ENCODE measurements at regions of chr12 and their contacts with region 1.

Region 1: GRCh38 chr12:1795785-1796514 is 24.4 kb upstream of the LRTM2 start:
- DNase-seq: peak; percentile 95
- ATAC-seq: peak; percentile 92
- H3K4me3 ChIP-seq: peak overlapping the region; percentile 64 to 88 (median 67)
- H3K4me3 Mint-ChIP-seq: peak overlapping the region; percentile 98
- H3K27ac ChIP-seq: peak overlapping the region; percentile 67 to 83
- H3K27ac Mint-ChIP-seq: peak overlapping the region; percentile 97
- H3K4me1 ChIP-seq: peaks cover 14 to 37% of the 10 kb centered on the region in 2 donors
- H3K4me1 Mint-ChIP-seq: peaks cover 33% of the 10 kb centered on the region
- H3K27me3 ChIP-seq: no peaks in the 10 kb centered on the region
- H3K27me3 Mint-ChIP-seq: no peaks in the 10 kb centered on the region
- CTCF ChIP-seq: peak; percentile 90

Region 2: GRCh38 chr12:1117970-1118563 is 677.9 kb before region 1 on chr12:
- CTCF ChIA-PET with region 1: interaction called, 24 read pairs
- POLR2A ChIA-PET with region 1: no interaction called
- intact Hi-C with region 1: no loop called
- DNase-seq: peak; percentile 80
- ATAC-seq: peak; percentile 88
- H3K4me3 ChIP-seq: no peak overlapping the region
- H3K4me3 Mint-ChIP-seq: no peak overlapping the region
- H3K27ac ChIP-seq: no peak overlapping the region
- H3K27ac Mint-ChIP-seq: no peak overlapping the region
- H3K4me1 ChIP-seq: no peaks in the 10 kb centered on the region
- H3K4me1 Mint-ChIP-seq: no peaks in the 10 kb centered on the region
- H3K27me3 ChIP-seq: no peaks in the 10 kb centered on the region
- H3K27me3 Mint-ChIP-seq: no peaks in the 10 kb centered on the region
- CTCF ChIP-seq: peak; percentile 98

Region 3: DNA sequence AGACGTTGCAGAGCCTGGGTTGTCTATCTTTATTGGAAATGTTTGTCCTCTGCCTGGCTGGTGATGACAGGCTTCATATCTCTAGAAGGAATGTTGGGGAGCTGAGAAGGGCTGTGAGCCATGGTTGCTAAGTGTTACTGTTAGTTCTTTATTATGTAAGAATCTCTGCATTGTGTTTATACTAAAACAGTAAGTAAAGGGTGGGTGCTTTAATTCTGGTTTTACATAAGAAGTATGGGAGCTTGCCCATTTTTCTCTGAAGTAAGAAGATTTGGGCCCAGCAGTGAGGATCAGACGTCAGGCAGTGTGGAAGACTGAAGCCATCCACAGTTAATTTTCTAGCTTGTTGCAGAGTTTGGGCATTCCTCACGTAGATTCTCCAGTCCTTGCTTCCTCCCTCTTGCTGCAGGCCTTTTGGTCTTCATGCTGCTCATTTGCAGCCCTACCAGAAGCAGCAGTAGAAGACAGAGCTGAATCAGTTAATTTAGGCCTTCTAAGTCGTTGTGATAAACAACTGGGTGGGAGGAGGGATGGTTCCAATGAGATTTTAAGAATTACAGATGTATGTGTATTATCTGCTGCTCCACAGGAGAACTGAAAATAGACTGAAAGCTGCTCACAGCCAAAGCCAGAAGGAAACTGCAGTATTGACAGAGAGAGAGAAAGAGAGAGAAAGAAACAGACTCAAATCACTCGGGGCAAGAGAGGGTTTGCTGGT is 145.5 kb before region 1 on chr12:
- CTCF ChIA-PET with region 1: interaction called, 620 read pairs
- POLR2A ChIA-PET with region 1: interaction called, 7 read pairs
- intact Hi-C with region 1: loop called (anchors 1 kb)
- DNase-seq: no peak
- ATAC-seq: no peak
- H3K4me3 ChIP-seq: no peak overlapping the region
- H3K4me3 Mint-ChIP-seq: no peak overlapping the region
- H3K27ac ChIP-seq: no peak overlapping the region
- H3K27ac Mint-ChIP-seq: no peak overlapping the region
- H3K4me1 ChIP-seq: peaks cover 0 to 19% of the 10 kb centered on the region in 2 donors
- H3K4me1 Mint-ChIP-seq: peaks cover 11% of the 10 kb centered on the region
- H3K27me3 ChIP-seq: no peaks in the 10 kb centered on the region
- H3K27me3 Mint-ChIP-seq: peaks cover 31% of the 10 kb centered on the region
- CTCF ChIP-seq: no peak

Region 4: GRCh38 chr12:1690578-1691122 is 105.3 kb before region 1 on chr12 and contains the start of gene ADIPOR2:
- CTCF ChIA-PET with region 1: interaction called, 8 read pairs
- POLR2A ChIA-PET with region 1: no interaction called
- intact Hi-C with region 1: loop called (anchors 1 kb)
- DNase-seq: peak; percentile 97
- ATAC-seq: peak; percentile 94
- H3K4me3 ChIP-seq: peak within 1 kb of the TSS; percentile 51 to 91 (median 78)
- H3K4me3 Mint-ChIP-seq: peak within 1 kb of the TSS; percentile 86
- H3K27ac ChIP-seq: peak within 1 kb of the TSS; percentile 81 to 97
- H3K27ac Mint-ChIP-seq: peak within 1 kb of the TSS; percentile 96
- H3K4me1 ChIP-seq: peaks cover 28 to 30% of the 10 kb centered on the region in 2 donors
- H3K4me1 Mint-ChIP-seq: peaks cover 36% of the 10 kb centered on the region
- H3K27me3 ChIP-seq: no peaks in the 10 kb centered on the region
- H3K27me3 Mint-ChIP-seq: peaks cover 6% of the 10 kb centered on the region
- CTCF ChIP-seq: no peak
- total RNA-seq, gene ADIPOR2: 35.9 and 38.9 TPM in 2 replicates

Region 5: GRCh38 chr12:1855241-1855640 is 59.3 kb after region 1 on chr12:
- CTCF ChIA-PET with region 1: no interaction called
- POLR2A ChIA-PET with region 1: no interaction called
- intact Hi-C with region 1: no loop called
- DNase-seq: no peak
- ATAC-seq: no peak
- H3K4me3 ChIP-seq: no peak overlapping the region
- H3K4me3 Mint-ChIP-seq: no peak overlapping the region
- H3K27ac ChIP-seq: no peak overlapping the region
- H3K27ac Mint-ChIP-seq: no peak overlapping the region
- H3K4me1 ChIP-seq: no peaks in the 10 kb centered on the region
- H3K4me1 Mint-ChIP-seq: no peaks in the 10 kb centered on the region
- H3K27me3 ChIP-seq: peaks cover 0 to 6% (median 0%) of the 10 kb centered on the region in 4 experiments
- H3K27me3 Mint-ChIP-seq: peaks cover 8% of the 10 kb centered on the region
- CTCF ChIP-seq: no peak

Region 6: GRCh38 chr12:1927751-1928351 is 131.9 kb after region 1 on chr12:
- CTCF ChIA-PET with region 1: interaction called, 10 read pairs
- POLR2A ChIA-PET with region 1: interaction called, 6 read pairs
- intact Hi-C with region 1: no loop called
- DNase-seq: no peak
- ATAC-seq: no peak
- H3K4me3 ChIP-seq: no peak overlapping the region
- H3K4me3 Mint-ChIP-seq: no peak overlapping the region
- H3K27ac ChIP-seq: no peak overlapping the region
- H3K27ac Mint-ChIP-seq: no peak overlapping the region
- H3K4me1 ChIP-seq: peaks cover 64 to 76% of the 10 kb centered on the region in 2 donors
- H3K4me1 Mint-ChIP-seq: peaks cover 73% of the 10 kb centered on the region
- H3K27me3 ChIP-seq: no peaks in the 10 kb centered on the region
- H3K27me3 Mint-ChIP-seq: no peaks in the 10 kb centered on the region
- CTCF ChIP-seq: no peak

Region 7: DNA sequence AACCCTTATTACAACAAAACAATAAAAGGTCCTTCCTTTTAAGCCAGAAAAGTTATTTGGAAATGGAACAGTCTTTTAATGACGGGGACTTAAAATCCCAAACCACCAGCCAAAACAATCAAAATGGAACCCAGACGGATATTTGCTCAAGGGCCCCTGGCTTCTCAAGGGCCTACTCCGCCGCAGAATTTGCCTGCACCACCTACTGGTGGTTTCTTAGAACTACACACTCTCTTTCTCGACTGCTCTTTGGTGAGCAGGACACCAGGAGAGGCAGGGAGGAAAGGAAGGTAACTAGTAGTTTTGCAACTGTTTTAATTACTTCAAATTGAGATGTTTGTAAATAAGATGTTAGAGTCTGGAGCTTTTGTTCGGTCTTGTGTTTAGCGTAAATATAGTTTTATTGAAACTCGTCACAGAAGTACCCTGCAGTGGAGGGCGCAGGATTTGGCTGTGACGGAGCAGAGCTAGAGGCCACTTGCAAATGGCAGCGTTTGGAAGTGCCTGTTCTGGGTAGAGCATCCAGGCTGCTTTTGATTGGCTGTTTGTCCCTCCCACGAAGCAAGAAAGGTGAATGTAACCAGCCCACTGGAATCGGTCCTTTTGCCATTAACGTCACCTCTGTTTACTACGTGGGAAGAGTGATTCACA is 495.4 kb after region 1 on chr12:
- CTCF ChIA-PET with region 1: interaction called, 3 read pairs
- POLR2A ChIA-PET with region 1: no interaction called
- intact Hi-C with region 1: loop called (anchors 1 kb)
- DNase-seq: peak; percentile 58
- ATAC-seq: no peak
- H3K4me3 ChIP-seq: no peak overlapping the region
- H3K4me3 Mint-ChIP-seq: no peak overlapping the region
- H3K27ac ChIP-seq: no peak overlapping the region
- H3K27ac Mint-ChIP-seq: no peak overlapping the region
- H3K4me1 ChIP-seq: peaks cover 0 to 7% of the 10 kb centered on the region in 2 donors
- H3K4me1 Mint-ChIP-seq: peaks cover 6% of the 10 kb centered on the region
- H3K27me3 ChIP-seq: peaks cover 0 to 3% (median 0%) of the 10 kb centered on the region in 4 experiments
- H3K27me3 Mint-ChIP-seq: peaks cover 21% of the 10 kb centered on the region
- CTCF ChIP-seq: peak; percentile 88

Measured in B cell (primary cell).